GM10248 (cell line): ENCODE measurements at regions of chr2 and their contacts with region 1.

Region 1: GRCh38 chr2:20650880-20651730 is at the start of gene HS1BP3:
- DNase-seq: peak; percentile 98
- CTCF ChIP-seq: peak; percentile 99

Region 2: DNA sequence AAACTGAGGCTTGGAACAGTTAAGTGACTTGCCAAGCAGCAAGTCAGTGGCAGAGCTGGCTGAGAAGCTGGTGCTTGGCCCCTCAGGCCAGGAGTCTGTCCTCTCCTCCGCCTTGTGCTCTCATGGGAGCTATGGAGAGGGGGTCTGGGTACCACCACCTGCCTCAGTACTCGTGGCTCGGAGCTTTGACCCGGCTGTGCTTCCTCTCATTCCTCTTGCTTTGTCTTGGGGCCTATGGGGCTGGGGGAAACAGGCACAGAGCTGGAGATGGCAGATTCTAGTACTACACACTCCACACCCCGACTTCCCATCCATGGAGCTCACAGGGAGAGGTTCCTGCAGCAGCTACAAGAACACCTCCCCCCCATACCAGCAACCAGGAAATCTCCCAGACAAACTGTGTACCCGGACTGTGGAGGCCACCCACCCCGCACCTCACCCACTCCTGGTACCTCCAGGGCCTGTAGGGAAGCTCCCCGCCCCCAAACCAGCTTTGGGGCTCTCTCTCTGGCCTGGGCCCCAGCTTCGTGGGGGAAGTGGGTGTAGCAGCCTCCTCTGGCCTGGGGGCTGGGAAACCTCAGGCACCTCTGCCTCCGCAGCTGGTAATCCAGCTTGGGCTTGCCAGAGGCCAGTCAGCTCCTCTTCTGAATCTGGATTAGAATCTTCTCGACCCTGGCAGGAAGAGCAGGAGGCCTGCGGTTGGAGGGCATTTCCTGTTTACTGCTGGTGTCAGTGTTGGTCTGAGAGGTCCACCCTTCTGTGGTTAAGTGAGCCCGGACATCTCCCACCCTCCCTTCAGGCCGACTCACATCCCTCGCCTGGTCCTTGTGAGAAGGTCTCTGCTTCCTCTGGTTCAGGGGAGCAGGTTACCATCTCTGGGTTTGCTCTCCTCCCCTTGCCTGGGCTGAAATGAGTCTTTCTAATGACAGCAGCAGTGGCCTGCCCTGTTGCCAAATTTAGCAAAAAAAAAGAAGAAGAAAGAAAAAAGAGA is 226.5 kb before region 1 on chr2:
- CTCF ChIA-PET with region 1: interaction called, 62 read pairs
- POLR2A ChIA-PET with region 1: no interaction called
- DNase-seq: peak; percentile 64
- CTCF ChIP-seq: no peak

Region 3: DNA sequence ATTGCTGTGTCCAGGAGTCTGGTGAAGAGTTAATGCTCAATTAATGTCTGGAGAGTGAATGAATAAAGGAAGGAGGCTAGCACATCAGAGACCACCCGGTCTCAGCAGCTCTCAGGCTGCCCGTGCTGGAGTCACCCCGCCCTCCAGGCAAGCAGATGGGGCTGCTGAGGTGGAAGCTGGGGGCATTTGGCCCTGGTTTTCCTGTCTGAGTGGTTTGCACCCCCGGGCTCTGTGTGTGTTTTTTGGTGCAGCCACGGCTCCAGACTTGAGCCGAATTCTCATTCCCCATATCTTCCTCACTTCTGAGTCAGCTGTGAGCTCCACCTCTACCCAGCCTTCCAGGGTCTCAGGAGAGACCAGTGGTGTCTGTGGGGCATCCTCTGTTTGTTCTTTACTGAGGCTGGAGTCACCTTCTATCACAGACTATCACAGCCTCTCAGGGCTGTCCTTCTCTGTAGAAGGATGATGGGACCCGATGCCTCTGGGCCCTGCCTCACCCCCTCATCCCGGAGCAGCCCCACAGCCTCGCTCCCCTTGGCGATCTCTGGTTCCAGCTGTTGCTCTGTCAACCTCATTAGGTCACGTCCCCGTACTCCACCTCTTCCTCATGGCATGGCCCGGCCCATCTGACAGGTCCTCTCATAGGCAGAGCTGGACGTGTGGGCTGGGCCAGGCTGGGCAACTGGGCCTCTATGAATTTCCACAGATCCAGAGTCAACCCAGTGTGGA is 61.0 kb before region 1 on chr2:
- CTCF ChIA-PET with region 1: no interaction called
- POLR2A ChIA-PET with region 1: no interaction called
- DNase-seq: no peak
- CTCF ChIP-seq: no peak

Region 4: DNA sequence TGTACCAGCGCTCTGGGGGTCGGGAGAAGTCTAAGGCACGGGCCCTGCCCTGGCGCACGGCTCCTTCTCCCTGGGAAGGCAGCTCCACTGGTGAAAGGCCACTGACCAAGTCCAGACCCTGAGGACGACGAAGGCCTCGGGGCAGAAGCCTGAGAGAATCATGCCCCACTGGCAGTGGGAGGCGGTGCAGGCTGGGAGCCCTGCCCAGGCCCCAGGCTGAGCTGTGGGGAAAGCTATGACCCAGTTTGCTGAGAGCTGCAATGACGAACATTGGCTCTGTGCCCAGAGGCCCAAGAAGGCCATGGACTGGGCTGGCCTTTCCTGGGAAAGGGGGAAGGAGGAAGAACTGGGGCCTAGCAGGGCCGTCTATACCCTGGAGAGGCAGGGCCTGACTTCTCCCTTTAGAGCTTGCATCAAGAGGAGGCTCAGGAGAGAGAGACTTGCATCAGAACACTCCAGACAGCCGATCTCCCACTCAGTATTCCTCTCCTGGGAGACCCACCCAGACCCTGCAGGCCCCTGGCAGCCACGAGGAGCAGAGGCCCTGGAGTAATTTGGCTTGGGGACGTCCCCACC is 33.1 kb before region 1 on chr2:
- CTCF ChIA-PET with region 1: interaction called, 10 read pairs
- POLR2A ChIA-PET with region 1: no interaction called
- DNase-seq: no peak
- CTCF ChIP-seq: no peak

Region 5: DNA sequence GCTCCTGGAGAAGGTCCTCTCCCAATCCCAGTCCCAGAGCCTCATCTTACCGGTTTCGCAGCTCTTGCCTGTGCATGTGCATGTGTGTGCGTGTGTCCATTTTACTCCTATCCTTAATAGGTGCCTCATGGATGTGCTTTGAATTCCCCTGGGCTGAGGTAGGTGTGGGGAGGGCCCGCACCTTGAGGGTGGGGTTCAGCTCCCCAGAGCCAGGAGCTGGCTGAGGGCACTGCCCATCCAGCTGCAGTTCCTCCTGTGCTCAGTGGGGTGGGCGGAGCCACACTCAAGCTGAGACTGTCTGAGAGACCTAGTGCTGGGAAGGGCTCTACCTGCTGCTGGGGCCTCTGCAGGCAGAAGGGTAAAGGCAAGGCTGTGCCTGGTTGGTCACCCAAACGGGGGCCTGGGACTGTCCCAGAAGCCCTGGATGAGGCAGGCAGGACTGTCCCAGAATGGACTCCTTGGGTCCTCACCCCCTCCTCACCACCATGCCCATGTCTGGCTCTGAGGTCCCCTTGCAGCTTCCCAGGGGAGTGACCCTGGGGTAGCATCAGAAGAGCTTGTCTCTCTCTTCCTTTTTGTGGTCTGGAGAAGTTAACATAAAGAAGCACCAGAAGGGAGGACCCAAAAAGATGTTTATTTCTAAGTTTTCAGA is 24.7 kb after region 1 on chr2:
- CTCF ChIA-PET with region 1: interaction called, 12 read pairs
- POLR2A ChIA-PET with region 1: no interaction called
- DNase-seq: no peak
- CTCF ChIP-seq: no peak

Region 6: DNA sequence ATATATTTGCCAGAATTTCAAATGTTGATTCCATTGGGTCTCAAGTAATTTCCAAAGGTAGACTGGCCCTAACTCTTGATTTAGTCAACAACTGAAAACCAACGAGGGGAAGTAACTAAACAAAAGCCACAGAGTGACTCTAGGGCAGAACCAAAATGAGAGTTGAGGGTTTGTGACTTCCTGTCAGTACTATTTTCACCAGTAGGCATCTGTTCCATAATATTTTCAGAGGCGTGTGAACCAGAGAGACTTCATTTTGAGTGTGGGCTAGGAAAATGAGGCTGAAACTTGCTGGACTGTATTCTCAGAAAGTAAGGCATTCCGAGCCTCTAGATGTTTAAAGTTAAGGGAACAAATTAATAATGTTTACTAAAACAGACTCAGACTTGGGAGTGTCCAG is 86.4 kb after region 1 on chr2:
- CTCF ChIA-PET with region 1: no interaction called
- POLR2A ChIA-PET with region 1: no interaction called
- DNase-seq: peak; percentile 28
- CTCF ChIP-seq: no peak